ENCODE measurements at regions of chr3 and their contacts with region 1.

Region 1: GRCh38 chr3:65999606-66000005 is 39.1 kb downstream of the MAGI1 start:
- DNase-seq: no peak
- ATAC-seq: no peak
- H3K4me3 ChIP-seq: no peak overlapping the region
- H3K27ac ChIP-seq: no peak overlapping the region
- H3K4me1 ChIP-seq: peaks cover 9% of the 10 kb centered on the region
- H3K27me3 ChIP-seq: no peaks in the 10 kb centered on the region
- CTCF ChIP-seq: no peak

Region 2: GRCh38 chr3:66066963-66067629 is 67.5 kb after region 1 on chr3:
- intact Hi-C with region 1: loop called in 1 of 2 experiments (anchors 2 kb)
- DNase-seq: no peak
- ATAC-seq: no peak
- H3K4me3 ChIP-seq: no peak overlapping the region
- H3K27ac ChIP-seq: no peak overlapping the region
- H3K4me1 ChIP-seq: no peaks in the 10 kb centered on the region
- H3K27me3 ChIP-seq: no peaks in the 10 kb centered on the region
- CTCF ChIP-seq: no peak